AG04449 (cell line): ENCODE measurements at regions of chr1 and their contacts with region 1.

Region 1: DNA sequence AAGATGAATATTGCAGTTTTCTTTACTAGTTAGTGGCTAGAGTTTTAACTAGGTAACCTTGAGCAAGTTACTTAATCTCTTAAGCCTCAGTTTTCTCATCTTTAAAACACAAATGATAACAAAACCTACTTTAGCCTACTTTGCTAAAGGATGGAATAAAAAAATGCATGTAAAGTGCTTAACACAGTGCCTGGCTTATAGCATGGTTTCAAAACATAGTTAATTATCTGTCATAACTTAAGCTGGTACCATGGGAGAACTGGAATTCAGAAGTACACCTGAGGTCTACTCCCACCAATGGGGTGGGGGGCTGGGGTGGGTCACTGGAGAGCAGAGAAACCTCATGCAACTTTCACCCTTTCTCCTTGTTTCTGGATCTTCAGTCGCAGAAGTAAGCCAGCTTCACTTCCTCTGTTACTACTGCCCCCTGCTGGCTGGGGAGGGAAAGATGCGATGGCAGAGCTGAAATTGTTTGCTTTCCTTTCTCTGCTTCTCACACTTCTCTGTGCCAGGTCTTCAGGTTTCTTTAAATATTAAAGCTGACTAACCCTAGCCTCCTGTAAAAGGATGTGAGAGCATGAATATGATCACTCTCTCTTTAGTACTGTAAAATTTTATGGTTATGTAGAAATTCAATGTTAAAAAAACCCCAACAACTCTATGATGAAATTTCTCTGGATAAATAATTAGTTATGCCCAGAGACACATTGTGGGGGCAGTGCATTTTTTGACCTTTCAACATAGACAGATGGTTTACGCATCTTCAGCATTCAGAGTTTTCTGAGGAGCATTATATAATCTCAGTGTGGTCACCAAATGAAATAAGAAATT is 324.2 kb downstream of the HLX start:
- DNase-seq: no peak
- H3K4me3 ChIP-seq: no peak overlapping the region
- CTCF ChIP-seq: peak; percentile 87

Region 2: GRCh38 chr1:220810179-220810653 is 393.2 kb before region 1 on chr1:
- CTCF ChIA-PET with region 1: interaction called, 22 read pairs
- POLR2A ChIA-PET with region 1: no interaction called
- DNase-seq: no peak
- H3K4me3 ChIP-seq: peak overlapping the region; percentile 44
- CTCF ChIP-seq: peak; percentile 95

Region 3: GRCh38 chr1:220879076-220879508 is 324.3 kb before region 1 on chr1 and contains the start of gene HLX:
- CTCF ChIA-PET with region 1: interaction called, 145 read pairs
- POLR2A ChIA-PET with region 1: interaction called, 3 read pairs
- DNase-seq: peak; percentile 57
- H3K4me3 ChIP-seq: peak within 1 kb of the TSS; percentile 77
- CTCF ChIP-seq: no peak

Region 4: GRCh38 chr1:221180704-221181368 is 22.6 kb before region 1 on chr1:
- CTCF ChIA-PET with region 1: interaction called, 14 read pairs
- POLR2A ChIA-PET with region 1: no interaction called
- DNase-seq: no peak
- H3K4me3 ChIP-seq: no peak overlapping the region
- CTCF ChIP-seq: no peak

Region 5: GRCh38 chr1:221217029-221217428 is 13.6 kb after region 1 on chr1:
- CTCF ChIA-PET with region 1: interaction called, 20 read pairs
- POLR2A ChIA-PET with region 1: no interaction called
- DNase-seq: no peak
- H3K4me3 ChIP-seq: no peak overlapping the region
- CTCF ChIP-seq: no peak